CD8-positive, alpha-beta T cell (primary cell): ENCODE measurements at regions of chr17 and their contacts with region 1.

Region 1: GRCh38 chr17:75749545-75750389 is 15.2 kb downstream of the GALK1 start:
- DNase-seq: peak; percentile 77 to 95 (median 87)
- ATAC-seq: peak; percentile 64
- H3K4me3 ChIP-seq: no peak overlapping the region
- H3K4me3 Mint-ChIP-seq: no peak overlapping the region
- H3K27ac ChIP-seq: no peak overlapping the region
- H3K27ac Mint-ChIP-seq: no peak overlapping the region
- H3K4me1 ChIP-seq: peaks cover 23% of the 10 kb centered on the region
- H3K4me1 Mint-ChIP-seq: peaks cover 19% of the 10 kb centered on the region
- H3K27me3 ChIP-seq: no peaks in the 10 kb centered on the region
- H3K27me3 Mint-ChIP-seq: peaks cover 2% of the 10 kb centered on the region
- CTCF ChIP-seq: peak; percentile 90

Region 2: GRCh38 chr17:75632863-75633485 is 116.8 kb before region 1 on chr17 and contains the start of gene SMIM5:
- CTCF ChIA-PET with region 1: interaction called, 428 read pairs
- POLR2A ChIA-PET with region 1: interaction called, 6 read pairs
- intact Hi-C with region 1: loop called (anchors 1 kb)
- DNase-seq: peak; percentile 70 to 89 (median 82)
- ATAC-seq: peak; percentile 89
- H3K4me3 ChIP-seq: no peak within 1 kb of the TSS
- H3K4me3 Mint-ChIP-seq: no peak within 1 kb of the TSS
- H3K27ac ChIP-seq: no peak within 1 kb of the TSS
- H3K27ac Mint-ChIP-seq: no peak within 1 kb of the TSS
- H3K4me1 ChIP-seq: peaks cover 8% of the 10 kb centered on the region
- H3K4me1 Mint-ChIP-seq: peaks cover 5% of the 10 kb centered on the region
- H3K27me3 ChIP-seq: no peaks in the 10 kb centered on the region
- H3K27me3 Mint-ChIP-seq: no peaks in the 10 kb centered on the region
- CTCF ChIP-seq: peak; percentile 91
- total RNA-seq, gene SMIM5: 0.60 to 2.1 TPM

Region 3: GRCh38 chr17:75673487-75673886 is 76.3 kb before region 1 on chr17:
- CTCF ChIA-PET with region 1: interaction called, 145 read pairs
- POLR2A ChIA-PET with region 1: no interaction called
- intact Hi-C with region 1: loop called (anchors 1 kb)
- DNase-seq: no peak
- ATAC-seq: no peak
- H3K4me3 ChIP-seq: no peak overlapping the region
- H3K4me3 Mint-ChIP-seq: no peak overlapping the region
- H3K27ac ChIP-seq: no peak overlapping the region
- H3K27ac Mint-ChIP-seq: no peak overlapping the region
- H3K4me1 ChIP-seq: peaks cover 2% of the 10 kb centered on the region
- H3K4me1 Mint-ChIP-seq: peaks cover 18% of the 10 kb centered on the region
- H3K27me3 ChIP-seq: no peaks in the 10 kb centered on the region
- H3K27me3 Mint-ChIP-seq: no peaks in the 10 kb centered on the region
- CTCF ChIP-seq: no peak

Region 4: GRCh38 chr17:75738218-75738802 is 11.5 kb before region 1 on chr17:
- CTCF ChIA-PET with region 1: interaction called, 58 read pairs
- POLR2A ChIA-PET with region 1: interaction called, 3 read pairs
- intact Hi-C with region 1: no loop called
- DNase-seq: peak in 1 of 9 experiments; percentile 40
- ATAC-seq: no peak
- H3K4me3 ChIP-seq: no peak overlapping the region
- H3K4me3 Mint-ChIP-seq: no peak overlapping the region
- H3K27ac ChIP-seq: no peak overlapping the region
- H3K27ac Mint-ChIP-seq: no peak overlapping the region
- H3K4me1 ChIP-seq: no peaks in the 10 kb centered on the region
- H3K4me1 Mint-ChIP-seq: peaks cover 3% of the 10 kb centered on the region
- H3K27me3 ChIP-seq: no peaks in the 10 kb centered on the region
- H3K27me3 Mint-ChIP-seq: no peaks in the 10 kb centered on the region
- CTCF ChIP-seq: no peak

Region 5: GRCh38 chr17:75822119-75822799 is 72.5 kb after region 1 on chr17:
- CTCF ChIA-PET with region 1: interaction called, 12 read pairs
- POLR2A ChIA-PET with region 1: interaction called, 3 read pairs
- intact Hi-C with region 1: loop called in 1 of 2 experiments (anchors 1 kb)
- DNase-seq: peak in 8 of 9 experiments; percentile 17 to 68 (median 52)
- ATAC-seq: peak; percentile 90
- H3K4me3 ChIP-seq: no peak overlapping the region
- H3K4me3 Mint-ChIP-seq: peak overlapping the region; percentile 31
- H3K27ac ChIP-seq: peak overlapping the region; percentile 8 to 53
- H3K27ac Mint-ChIP-seq: peak overlapping the region; percentile 83
- H3K4me1 ChIP-seq: peaks cover 27% of the 10 kb centered on the region
- H3K4me1 Mint-ChIP-seq: peaks cover 24% of the 10 kb centered on the region
- H3K27me3 ChIP-seq: no peaks in the 10 kb centered on the region
- H3K27me3 Mint-ChIP-seq: no peaks in the 10 kb centered on the region
- CTCF ChIP-seq: no peak

Region 6: GRCh38 chr17:75896415-75897159 is 146.8 kb after region 1 on chr17 and contains the start of gene TRIM65:
- CTCF ChIA-PET with region 1: interaction called, 11 read pairs
- POLR2A ChIA-PET with region 1: interaction called, 7 read pairs
- intact Hi-C with region 1: no loop called
- DNase-seq: peak; percentile 51 to 88 (median 78)
- ATAC-seq: peak; percentile 86
- H3K4me3 ChIP-seq: peak within 1 kb of the TSS; percentile 61 to 73
- H3K4me3 Mint-ChIP-seq: peak within 1 kb of the TSS; percentile 79
- H3K27ac ChIP-seq: peak within 1 kb of the TSS; percentile 47 to 66
- H3K27ac Mint-ChIP-seq: peak within 1 kb of the TSS; percentile 80
- H3K4me1 ChIP-seq: peaks cover 20% of the 10 kb centered on the region
- H3K4me1 Mint-ChIP-seq: peaks cover 27% of the 10 kb centered on the region
- H3K27me3 ChIP-seq: no peaks in the 10 kb centered on the region
- H3K27me3 Mint-ChIP-seq: no peaks in the 10 kb centered on the region
- CTCF ChIP-seq: peak; percentile 39
- total RNA-seq, gene TRIM65: 13.6 to 15.1 TPM